ENCODE measurements at regions of chr13 and their contacts with region 1.

Region 1: DNA sequence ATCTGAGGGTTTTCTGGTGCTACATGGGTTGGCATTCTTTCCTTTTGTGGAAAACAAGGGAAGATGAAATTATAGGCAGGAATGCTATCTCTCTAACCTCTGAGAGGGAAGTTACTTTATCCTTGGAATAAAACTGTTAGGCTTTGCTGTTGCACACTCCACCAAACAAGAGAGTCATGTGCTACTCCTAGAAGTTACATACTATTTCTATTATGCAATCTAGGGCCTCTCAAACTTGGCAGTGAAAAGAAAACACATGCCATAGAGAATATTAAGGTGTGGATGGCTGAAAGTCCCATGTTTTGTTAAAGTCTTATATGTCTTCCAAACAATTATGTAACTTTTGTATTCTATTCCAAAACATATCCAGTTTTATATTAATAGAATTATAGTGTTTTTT is 367.9 kb downstream of the SLC7A1 start:
- DNase-seq: no peak
- H3K4me3 ChIP-seq: no peak overlapping the region
- H3K27ac ChIP-seq: no peak overlapping the region
- H3K4me1 ChIP-seq: no peaks in the 10 kb centered on the region
- CTCF ChIP-seq: no peak

Region 2: GRCh38 chr13:29140277-29140676 is 87.3 kb before region 1 on chr13:
- CTCF ChIA-PET with region 1: no interaction called
- POLR2A ChIA-PET with region 1: no interaction called
- intact Hi-C with region 1: no loop called
- DNase-seq: no peak
- H3K4me3 ChIP-seq: no peak overlapping the region
- H3K27ac ChIP-seq: no peak overlapping the region
- H3K4me1 ChIP-seq: no peaks in the 10 kb centered on the region
- CTCF ChIP-seq: no peak

Region 3: DNA sequence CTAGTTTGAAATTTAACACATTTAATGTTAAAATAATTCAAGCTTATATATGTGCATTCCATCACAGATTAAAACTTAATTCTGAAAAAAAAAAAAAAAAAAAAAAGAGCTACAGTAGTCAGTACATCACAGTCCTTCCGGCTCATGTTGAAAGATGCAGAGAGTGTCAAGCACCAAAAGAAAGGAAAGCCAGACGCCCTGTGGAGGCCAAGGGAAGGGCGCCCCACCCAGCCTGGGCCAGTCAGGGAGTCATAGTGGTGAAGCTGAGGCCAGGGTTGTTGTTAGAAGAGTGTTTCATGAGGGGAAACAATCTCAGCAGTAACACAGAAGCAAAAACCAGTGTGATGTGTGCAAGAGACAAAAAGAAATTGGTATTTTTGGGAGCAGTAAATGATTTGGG is 32.1 kb before region 1 on chr13:
- CTCF ChIA-PET with region 1: no interaction called
- POLR2A ChIA-PET with region 1: interaction called, 12 read pairs
- intact Hi-C with region 1: no loop called
- DNase-seq: no peak
- H3K4me3 ChIP-seq: no peak overlapping the region
- H3K27ac ChIP-seq: no peak overlapping the region
- H3K4me1 ChIP-seq: peaks cover 8% of the 10 kb centered on the region
- CTCF ChIP-seq: no peak

Region 4: GRCh38 chr13:30978981-30979956 is 1751.7 kb after region 1 on chr13:
- CTCF ChIA-PET with region 1: no interaction called
- POLR2A ChIA-PET with region 1: no interaction called
- intact Hi-C with region 1: no loop called
- DNase-seq: peak; percentile 60
- H3K4me3 ChIP-seq: no peak overlapping the region
- H3K27ac ChIP-seq: no peak overlapping the region
- H3K4me1 ChIP-seq: no peaks in the 10 kb centered on the region
- CTCF ChIP-seq: peak; percentile 89